ENCODE measurements at regions of chr1 and their contacts with region 1.

Region 1: DNA sequence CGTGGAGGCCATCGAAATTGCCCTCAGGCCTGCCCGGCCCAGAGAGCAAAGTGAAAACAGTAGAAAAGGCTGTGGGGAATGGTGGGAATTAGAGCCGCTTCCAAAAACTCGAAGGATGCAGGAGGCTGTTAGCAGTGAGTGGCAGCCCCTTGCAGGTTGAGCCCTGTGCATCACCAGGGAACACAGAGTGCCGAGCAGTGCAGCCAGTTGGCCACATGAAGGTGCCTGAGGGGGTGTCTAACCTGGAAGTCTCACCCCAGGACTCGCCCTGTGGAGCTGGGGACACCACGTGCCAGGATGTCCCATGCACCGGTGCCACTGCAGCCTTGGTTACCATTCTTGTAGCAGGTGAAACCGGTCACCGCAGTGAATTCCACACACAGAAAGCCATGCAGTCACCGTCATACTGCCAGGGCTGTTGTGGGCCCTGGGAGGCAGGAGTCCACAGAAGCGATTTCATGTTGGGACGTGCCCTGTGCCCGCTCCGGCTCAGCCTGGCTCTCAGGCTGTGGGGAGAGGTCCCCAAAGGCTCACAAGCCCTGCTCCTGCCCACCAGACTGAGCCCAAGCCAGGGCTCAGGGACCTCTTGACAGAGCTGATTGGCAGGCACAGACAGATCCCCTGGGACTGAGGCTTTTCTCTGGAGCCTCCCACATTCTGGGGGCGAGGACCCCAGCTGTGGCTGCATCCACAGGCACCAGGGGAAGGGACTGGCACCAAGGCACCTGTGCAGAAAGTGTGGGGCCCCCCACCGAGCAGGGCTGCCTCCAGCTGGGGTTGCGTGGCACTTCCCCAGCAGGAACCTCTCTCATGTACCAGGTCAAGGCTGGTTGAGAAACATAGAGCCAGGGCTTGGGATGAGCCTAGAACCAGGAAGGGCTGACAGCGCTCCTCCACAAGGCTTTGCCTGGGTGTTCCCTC is 16.7 kb upstream of the ACTRT2 start:
- DNase-seq: peak; percentile 64

Region 2: DNA sequence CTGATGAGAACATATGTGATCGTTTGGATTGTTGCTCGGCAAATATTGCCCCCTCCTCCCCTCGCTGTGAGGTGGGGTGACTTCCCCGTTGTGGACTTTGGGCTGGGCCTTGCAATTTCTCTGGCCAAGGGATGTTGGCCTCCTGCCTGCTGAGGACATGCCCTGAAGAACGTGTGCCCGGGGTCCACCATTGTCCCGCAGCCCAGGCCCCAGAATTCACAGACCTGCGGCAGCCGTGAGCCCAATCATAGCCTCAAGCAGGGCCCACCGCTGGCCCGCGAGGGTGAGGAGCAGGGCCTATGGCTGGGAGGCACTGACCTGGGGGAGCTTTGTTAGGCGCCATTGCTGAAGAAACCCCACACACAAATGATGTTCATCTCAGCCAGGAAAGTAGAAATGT is 41.6 kb before region 1 on chr1:
- intact Hi-C with region 1: no loop called
- DNase-seq: peak; percentile 72

Region 3: DNA sequence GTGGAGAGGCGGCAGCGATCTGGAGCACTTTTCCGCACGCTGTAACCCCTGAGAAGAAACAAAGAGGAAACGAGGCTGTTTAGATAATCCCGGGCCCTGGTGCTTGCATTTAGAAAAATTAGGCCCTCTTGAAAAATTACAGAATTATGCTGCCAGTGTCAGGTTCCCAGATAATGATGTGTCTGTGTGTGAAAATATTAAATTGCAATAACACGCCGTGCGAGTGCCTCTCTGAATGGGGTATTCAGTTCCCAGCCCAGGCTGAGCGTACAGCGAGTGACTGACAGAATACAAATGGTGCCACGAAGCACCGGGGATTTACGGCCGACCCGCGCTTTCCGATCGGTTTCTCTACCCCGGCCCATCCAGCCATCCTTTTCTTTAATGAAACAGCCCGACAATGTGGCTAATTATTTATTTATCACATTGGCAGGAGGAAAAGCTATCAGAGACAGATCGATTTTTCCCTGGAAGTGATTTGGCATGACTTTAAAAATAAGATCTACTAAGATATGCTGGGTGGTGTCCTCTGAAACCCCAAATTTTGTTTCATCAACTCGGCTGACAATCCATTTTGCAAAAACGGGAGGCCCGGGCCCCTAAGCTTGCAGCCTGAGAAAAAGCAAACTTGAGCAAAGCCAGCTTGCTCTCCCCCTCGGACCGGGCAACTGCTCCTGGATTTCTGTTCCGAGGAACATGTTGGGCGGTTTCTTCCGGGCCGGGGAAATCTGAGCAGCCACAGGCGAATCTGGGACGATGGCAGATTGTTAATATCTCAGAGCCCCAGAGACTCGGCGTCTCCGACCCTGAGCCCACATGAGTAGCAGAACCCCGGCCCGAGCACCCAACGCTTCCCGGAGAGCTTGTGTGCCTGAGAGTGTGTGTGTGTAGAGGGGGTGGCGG is 75.8 kb after region 1 on chr1:
- intact Hi-C with region 1: no loop called
- DNase-seq: no peak

Region 4: GRCh38 chr1:3359351-3360104 is 355.0 kb after region 1 on chr1:
- intact Hi-C with region 1: loop called in 1 of 2 experiments (anchors 1 kb)
- DNase-seq: no peak

Measured in posterior vena cava (tissue), 2 donors.